ENCODE measurements at regions of chr11 and their contacts with region 1.

Region 1: GRCh38 chr11:45993531-45994001 is 71.1 kb downstream of the LARGE2 start:
- DNase-seq: no peak
- ATAC-seq: no peak
- H3K4me3 ChIP-seq: no peak overlapping the region
- H3K27ac ChIP-seq: no peak overlapping the region
- H3K4me1 ChIP-seq: no peaks in the 10 kb centered on the region
- H3K27me3 ChIP-seq: no peaks in the 10 kb centered on the region
- CTCF ChIP-seq: no peak

Region 2: DNA sequence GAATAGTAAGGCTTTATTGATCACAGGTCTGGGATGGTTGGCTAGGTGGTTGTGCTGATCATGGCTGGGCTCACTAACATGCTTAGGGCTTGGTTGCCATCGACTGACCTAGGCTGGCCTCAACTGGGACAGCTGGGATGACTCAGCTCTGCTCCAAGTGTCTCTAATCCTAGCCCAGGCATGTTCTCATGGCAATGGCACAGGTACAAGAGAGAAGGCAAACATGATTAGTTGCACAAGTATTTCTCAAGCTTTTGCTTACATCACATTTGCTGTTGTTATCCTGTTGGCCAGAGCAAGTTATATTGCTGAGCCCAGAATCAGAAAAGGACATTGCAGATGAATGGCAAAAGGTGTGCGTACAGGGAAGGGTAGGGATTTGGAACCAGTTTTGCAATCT is 257.1 kb before region 1 on chr11:
- CTCF ChIA-PET with region 1: no interaction called
- POLR2A ChIA-PET with region 1: no interaction called
- in situ Hi-C with region 1: no loop called
- intact Hi-C with region 1: no loop called
- DNase-seq: no peak
- ATAC-seq: no peak
- H3K4me3 ChIP-seq: no peak overlapping the region
- H3K27ac ChIP-seq: no peak overlapping the region
- H3K4me1 ChIP-seq: no peaks in the 10 kb centered on the region
- H3K27me3 ChIP-seq: peaks cover 6% of the 10 kb centered on the region; the same call in 1 of the 2 replicates
- CTCF ChIP-seq: no peak

Region 3: DNA sequence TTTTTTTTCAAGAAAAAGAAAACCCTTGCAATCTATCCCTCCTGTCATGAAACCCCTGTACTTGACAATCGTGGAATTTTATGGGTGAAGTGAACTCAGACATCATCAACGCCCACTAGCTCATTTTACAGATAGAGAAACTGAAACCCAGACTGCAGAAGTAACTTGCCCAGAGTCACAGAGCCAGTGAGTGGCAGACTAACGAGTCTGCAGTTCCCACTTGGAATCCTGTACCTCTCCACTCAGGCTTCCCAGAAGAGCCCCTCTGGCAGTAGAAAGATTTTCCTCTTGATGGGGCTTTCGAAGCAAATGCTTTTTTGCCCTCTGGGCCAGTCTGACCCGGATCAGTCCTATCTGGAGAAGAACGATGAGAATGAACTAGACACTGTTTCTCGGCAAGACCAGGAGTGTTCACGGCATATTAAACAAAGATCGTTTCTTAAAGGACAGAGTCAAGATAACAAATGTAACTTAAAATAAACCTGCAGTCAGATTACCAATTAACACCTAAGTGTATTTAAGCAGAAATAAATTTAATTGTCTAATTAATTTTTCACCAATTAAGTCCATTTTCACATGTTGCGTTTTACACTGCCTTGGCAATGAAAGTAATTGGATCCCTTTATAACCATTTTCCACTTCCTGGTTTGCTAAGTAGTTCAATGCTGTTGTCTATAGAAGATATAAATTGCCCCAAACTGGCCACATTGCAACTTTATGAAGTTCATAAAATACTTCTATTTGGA is 222.6 kb after region 1 on chr11:
- CTCF ChIA-PET with region 1: no interaction called
- POLR2A ChIA-PET with region 1: interaction called, 10 read pairs
- in situ Hi-C with region 1: no loop called
- intact Hi-C with region 1: no loop called
- DNase-seq: no peak
- ATAC-seq: peak; percentile 86
- H3K4me3 ChIP-seq: peak overlapping the region; percentile 19 to 45; a peak in 3 of 4 replicates
- H3K27ac ChIP-seq: peak overlapping the region; percentile 67
- H3K4me1 ChIP-seq: peaks cover 7% of the 10 kb centered on the region; the same call in 1 of the 2 replicates
- H3K27me3 ChIP-seq: no peaks in the 10 kb centered on the region
- CTCF ChIP-seq: no peak

Measured in Panc1 (cell line).